Heart right ventricle (tissue), 16 donors: ENCODE measurements at regions of chr1 and their contacts with region 1.

Region 1: DNA sequence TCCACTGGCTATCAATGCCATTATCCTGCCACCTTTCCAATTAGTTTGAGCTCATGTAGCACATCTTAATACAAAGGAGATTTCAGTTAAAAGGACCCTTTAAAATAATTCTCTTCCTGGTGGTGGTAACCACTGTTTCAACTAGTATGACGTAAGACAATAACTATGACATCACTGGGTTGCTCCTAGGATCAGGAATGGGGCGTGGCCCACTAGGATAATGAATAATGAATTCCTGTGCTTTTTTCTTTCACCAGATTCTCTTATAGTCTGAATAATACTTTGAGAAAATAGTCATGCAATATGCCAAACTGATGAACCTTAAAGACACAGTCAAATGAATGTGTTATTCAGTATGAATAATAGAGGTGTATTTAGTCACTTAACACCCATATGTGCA is 10.6 kb upstream of the KIFAP3 start:
- DNase-seq: no peak
- ATAC-seq: no peak
- H3K4me3 ChIP-seq: no peak overlapping the region
- H3K27ac ChIP-seq: no peak overlapping the region
- H3K4me1 ChIP-seq: no peaks in the 10 kb centered on the region
- H3K27me3 ChIP-seq: no peaks in the 10 kb centered on the region
- CTCF ChIP-seq: no peak

Region 2: GRCh38 chr1:169974067-169974466 is 111.0 kb before region 1 on chr1:
- intact Hi-C with region 1: no loop called
- DNase-seq: no peak
- ATAC-seq: no peak
- H3K4me3 ChIP-seq: no peak overlapping the region
- H3K27ac ChIP-seq: no peak overlapping the region
- H3K4me1 ChIP-seq: no peaks in the 10 kb centered on the region
- H3K27me3 ChIP-seq: no peaks in the 10 kb centered on the region
- CTCF ChIP-seq: no peak

Region 3: GRCh38 chr1:171107262-171107940 is 1022.3 kb after region 1 on chr1:
- intact Hi-C with region 1: loop called in 1 of 10 experiments (anchors 5 kb)
- DNase-seq: no peak
- ATAC-seq: peak in 4 of 8 donors; percentile 53 to 68 (median 62)
- H3K4me3 ChIP-seq: no peak overlapping the region
- H3K27ac ChIP-seq: peak overlapping the region in 4 of 10 donors; percentile 18 to 45 (median 32)
- H3K4me1 ChIP-seq: peaks cover 0 to 48% (median 5%) of the 10 kb centered on the region in 9 donors
- H3K27me3 ChIP-seq: no peaks in the 10 kb centered on the region
- CTCF ChIP-seq: peak in 5 of 9 donors; percentile 40 to 55 (median 44)